Activated CD4-positive, alpha-beta memory T cell treated with anti-CD3 and anti-CD28 coated beads for 36 hours (primary cell): ENCODE measurements at regions of chr1 and their contacts with region 1.

Region 1: DNA sequence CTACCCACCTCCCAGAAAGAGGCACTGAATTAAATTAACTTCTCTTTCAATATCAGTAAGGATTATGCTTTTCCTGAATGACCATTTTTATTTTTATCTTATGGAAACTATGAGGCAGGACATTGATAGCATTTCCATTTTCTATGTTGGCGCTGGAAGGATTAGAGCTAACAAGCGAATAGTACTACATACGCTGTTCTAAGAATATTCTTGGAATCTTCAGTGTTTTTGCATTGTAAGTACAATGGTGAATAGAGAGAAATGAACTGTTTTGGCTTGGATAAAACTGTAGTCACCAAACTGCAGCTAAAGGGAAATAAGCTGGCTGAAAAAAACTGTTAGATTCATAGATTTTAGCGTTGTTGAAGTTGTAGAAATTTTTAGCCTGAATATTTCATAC is 779.0 kb upstream of the ADGRL4 start:
- DNase-seq: no peak
- H3K4me3 Mint-ChIP-seq: no peak overlapping the region
- H3K27ac Mint-ChIP-seq: no peak overlapping the region
- H3K4me1 Mint-ChIP-seq: no peaks in the 10 kb centered on the region
- H3K27me3 Mint-ChIP-seq: no peaks in the 10 kb centered on the region

Region 2: DNA sequence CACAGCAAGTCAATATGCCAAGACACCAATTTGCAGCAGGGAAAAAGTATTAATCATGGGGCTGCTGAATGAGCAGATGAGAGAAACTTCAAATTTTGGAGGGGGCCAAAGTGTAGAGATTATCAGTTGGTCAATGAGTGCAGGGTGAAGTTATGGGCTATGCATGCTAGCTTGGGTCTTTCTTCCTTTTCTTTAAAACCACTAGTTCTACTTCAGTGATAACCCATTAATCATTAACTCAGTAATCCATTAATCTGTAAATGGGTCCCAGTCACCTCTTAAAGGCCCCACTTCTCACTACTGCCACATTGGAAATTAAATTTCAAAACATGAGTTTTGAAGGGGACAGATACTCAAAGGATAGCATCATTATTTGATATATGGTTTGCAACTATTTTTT is 90.4 kb before region 1 on chr1:
- CTCF ChIA-PET with region 1: no interaction called
- POLR2A ChIA-PET with region 1: no interaction called
- intact Hi-C with region 1: no loop called
- DNase-seq: no peak
- H3K4me3 Mint-ChIP-seq: no peak overlapping the region
- H3K27ac Mint-ChIP-seq: no peak overlapping the region
- H3K4me1 Mint-ChIP-seq: no peaks in the 10 kb centered on the region
- H3K27me3 Mint-ChIP-seq: no peaks in the 10 kb centered on the region

Region 3: DNA sequence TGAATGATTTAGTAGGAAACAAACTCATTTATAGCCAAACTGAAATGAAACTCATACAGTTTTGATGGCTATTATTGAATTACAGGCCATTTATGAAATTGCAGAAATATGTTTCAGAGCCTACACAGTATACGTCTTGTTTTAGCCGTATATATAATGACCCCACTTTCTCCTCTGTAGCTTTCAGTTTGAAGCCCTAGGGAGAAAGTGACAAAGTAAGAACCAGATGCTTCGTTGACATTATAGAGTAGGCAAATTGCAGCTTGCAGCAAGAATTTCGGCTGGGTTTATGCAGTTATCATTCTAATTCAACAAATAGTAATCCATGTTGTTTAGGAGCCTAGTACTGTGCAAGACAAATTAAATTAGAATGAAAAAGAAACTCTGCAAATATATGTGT is 57.2 kb after region 1 on chr1:
- CTCF ChIA-PET with region 1: no interaction called
- POLR2A ChIA-PET with region 1: no interaction called
- intact Hi-C with region 1: loop called (anchors 2 kb)
- DNase-seq: no peak
- H3K4me3 Mint-ChIP-seq: no peak overlapping the region
- H3K27ac Mint-ChIP-seq: no peak overlapping the region
- H3K4me1 Mint-ChIP-seq: no peaks in the 10 kb centered on the region
- H3K27me3 Mint-ChIP-seq: no peaks in the 10 kb centered on the region